Cardiac septum (tissue), 1 donor: ENCODE measurements at regions of chr4 and their contacts with region 1.

Region 1: GRCh38 chr4:8403173-8403753 is 37.3 kb downstream of the ACOX3 start:
- DNase-seq: peak; percentile 94

Region 2: DNA sequence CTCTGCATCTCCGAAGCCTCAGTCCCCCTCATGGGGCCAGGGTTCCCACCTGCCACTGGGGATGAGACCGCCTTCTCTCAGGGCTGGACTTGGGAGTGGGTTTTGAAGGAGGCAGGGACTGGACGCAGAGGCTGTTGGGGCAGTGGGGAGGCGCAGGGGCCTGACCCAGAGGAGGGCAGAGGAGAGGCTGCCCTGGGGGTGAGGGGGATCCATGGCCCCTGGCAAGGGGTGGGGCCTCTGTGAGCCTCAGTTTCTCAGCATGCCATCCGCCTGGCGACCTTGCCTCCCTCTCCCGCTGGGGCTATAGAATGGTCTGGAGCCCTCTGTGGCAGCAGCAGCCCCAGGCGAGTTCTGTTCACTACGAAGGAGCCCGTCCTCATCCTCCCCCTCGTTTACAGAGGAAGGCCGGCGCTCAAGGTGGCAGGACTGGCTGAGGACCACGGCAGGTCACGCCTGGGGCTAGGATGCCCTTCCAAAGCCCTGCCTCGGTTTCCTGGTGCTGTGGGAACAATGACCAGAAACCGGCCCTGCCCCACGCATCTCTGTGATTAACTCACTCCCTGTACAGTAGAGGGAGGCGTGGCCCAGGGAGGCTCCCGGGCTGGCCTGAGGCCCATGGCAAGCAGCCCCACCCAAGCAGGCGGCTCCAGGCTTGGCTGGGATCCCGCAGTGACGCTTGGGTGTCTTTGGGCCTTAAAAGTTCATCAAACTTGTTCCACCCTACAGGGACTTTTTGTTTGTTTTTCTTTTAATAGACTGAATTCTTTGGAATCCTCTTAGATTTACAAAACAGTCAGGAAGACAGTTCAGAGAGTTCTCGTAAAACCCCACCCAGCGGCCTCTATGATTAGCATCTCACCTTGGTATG is 220.2 kb before region 1 on chr4:
- intact Hi-C with region 1: loop called (anchors 5 kb)
- DNase-seq: peak; percentile 93

Region 3: DNA sequence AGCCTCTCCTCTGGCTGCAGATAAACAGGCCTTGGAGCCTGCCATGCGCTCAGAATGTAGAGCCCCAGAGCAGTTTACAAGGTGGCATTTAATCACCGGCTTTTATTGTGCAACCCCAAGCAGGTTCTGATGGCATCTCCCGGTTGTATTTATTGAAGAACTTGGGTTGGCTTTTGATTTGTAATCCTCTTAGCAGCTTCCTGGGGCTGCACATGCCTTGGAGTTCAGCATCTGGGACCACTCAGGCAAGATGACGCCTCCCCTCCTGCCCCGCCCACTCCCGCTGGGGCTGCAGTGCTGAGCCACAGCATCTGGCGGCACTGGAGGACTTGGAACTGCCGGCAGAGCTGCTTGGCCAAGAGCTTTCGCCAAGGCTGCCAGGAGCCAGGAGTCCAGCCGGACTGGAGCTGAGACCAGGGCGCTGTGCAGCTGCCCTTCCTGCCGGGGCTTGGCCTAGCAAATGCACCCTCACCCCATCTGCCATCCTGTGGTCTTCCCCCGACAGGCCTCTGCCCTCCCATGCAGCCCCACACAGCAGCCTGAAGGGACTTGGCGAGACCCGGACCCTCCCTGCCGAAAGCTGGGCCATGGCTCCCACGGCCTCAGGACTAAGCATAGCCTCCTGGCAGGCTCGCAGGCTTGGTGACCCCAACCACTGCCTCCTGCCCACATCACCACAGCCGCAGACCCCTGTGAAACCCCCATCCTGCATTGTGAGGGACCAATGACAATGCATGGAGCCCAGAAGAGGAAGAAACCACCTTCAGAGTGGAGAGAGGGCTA is 128.3 kb before region 1 on chr4:
- intact Hi-C with region 1: loop called (anchors 2 kb)
- DNase-seq: peak; percentile 91

Region 4: DNA sequence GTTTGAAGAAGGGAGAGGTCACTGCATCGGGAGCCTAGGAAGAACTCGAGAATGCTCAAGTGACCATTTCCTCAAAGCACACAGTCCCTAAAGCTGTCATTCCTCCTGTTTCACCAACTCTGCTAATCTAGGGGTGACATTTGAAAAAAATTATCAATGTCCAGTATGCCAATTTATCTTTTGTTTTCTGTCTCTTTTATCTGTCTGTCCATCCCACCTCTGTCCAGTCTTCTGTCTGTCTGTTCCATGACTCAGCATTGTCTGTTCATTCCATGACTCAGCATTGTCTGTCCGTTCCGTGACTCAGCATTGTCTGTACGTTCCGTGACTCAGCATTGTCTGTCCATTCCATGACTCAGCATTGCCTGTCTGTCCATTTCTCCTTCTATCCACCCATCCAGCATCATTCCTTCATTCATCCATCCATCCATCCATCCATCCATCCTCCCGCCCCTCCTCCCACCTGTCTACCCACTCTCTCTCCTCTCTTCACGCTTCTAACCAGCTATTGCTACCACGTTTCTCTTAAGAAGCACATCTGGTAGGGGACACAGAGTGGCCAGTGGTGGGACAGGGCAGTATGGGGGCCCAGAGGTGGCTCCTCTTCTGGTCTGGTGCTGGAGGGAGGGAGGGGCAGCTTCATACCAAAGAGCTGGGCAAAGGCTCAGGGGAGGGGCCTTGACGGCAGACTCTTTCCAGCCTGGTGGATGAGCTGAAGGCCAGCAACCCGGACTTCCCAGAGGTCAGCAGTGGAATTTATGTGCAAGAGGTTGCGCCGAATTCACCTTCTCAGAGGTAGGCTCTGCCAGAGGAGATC is 99.6 kb before region 1 on chr4:
- intact Hi-C with region 1: no loop called
- DNase-seq: peak; percentile 36

Region 5: DNA sequence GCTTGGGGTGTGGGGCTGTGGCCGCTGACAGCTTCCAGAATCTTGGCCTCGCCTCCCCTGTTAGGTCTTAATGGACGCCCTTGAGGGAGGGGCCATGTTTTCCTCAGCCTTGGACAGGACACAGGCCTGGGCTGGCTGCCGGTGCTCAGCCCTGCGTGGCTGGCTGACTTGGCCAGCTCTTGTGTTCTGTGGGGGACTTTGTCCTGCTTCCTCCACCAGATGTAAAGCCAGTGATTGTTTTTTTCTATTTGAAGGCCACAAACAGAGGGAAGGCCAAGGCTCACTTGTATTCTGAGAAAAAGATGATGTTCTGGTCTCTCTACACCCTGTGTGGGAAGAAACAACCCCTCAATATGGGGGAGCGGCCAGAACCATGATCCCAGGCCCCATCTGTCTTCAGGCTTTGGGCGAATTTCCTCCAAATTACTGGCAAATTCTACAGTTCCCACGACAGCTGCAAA is 62.5 kb before region 1 on chr4:
- intact Hi-C with region 1: no loop called
- DNase-seq: peak; percentile 87

Region 6: GRCh38 chr4:8419181-8420041 is 16.1 kb after region 1 on chr4:
- intact Hi-C with region 1: no loop called
- DNase-seq: no peak

Region 7: GRCh38 chr4:8495851-8496202 is 92.6 kb after region 1 on chr4:
- intact Hi-C with region 1: no loop called
- DNase-seq: no peak